GM12878 (cell line): ENCODE measurements at regions of chr3 and their contacts with region 1.

Region 1: DNA sequence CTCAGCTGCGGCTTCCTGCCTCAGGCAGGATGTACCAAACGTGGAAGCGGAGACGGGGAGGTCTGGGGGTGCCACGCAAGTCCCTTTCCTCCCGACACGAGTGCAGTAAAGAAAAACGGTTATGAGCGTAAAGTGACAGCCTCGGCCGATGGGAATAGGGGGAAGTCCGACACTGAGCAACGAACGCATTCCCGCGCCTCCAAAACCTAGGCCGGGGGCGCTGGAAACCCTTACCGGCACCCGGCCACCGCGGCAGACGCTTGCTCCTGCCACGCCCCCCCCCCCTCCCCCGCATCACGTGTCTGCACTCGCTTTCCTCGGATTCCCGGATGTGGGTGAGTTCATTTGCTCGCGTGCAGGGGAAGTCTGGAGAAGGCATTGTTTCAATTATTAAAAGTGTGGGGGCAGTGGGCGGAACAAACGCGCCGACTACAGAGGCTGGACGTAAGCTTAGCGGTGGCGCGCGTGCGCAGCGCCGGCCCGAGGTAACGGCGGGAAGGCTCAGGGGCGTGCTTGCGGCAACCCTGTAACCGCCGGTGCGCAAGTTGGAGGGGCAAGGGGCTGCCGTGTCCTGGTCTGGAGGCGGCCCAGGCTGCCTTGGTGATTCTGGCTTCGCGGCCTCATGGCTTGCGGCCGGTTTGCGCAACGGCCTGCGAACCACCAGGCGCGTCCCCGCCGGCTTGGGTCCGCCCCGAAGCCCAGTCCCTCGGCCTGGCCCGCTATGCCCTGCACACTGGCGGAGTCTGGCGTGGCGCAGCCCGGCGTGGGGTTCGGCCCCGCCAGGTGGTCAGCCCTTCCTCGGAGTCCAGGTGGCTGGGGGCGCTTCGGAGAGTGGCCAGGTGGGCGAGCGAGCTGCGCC is at the starts of genes ANAPC13 and CEP63:
- DNase-seq: peak; percentile 96
- ATAC-seq: peak; percentile 90
- H3K4me3 ChIP-seq: peak within 1 kb of the TSS; percentile 82
- H3K27ac ChIP-seq: peak within 1 kb of the TSS; percentile 87
- H3K4me1 ChIP-seq: peaks cover 6% of the 10 kb centered on the region
- H3K27me3 ChIP-seq: no peaks in the 10 kb centered on the region
- CTCF ChIP-seq: no peak
- EP300 ChIP-seq: 0 out of 4 replicates have a peak, but pooled peaks of 1 of the 2 experiments have one; percentile 7
- POLR2A ChIP-seq: peak; percentile 89
- RAD21 ChIP-seq: no peak
- polyA plus RNA-seq, gene ANAPC13: 129 to 139 TPM
- polyA plus RNA-seq, gene CEP63: 14.0 to 16.4 TPM

Region 2: DNA sequence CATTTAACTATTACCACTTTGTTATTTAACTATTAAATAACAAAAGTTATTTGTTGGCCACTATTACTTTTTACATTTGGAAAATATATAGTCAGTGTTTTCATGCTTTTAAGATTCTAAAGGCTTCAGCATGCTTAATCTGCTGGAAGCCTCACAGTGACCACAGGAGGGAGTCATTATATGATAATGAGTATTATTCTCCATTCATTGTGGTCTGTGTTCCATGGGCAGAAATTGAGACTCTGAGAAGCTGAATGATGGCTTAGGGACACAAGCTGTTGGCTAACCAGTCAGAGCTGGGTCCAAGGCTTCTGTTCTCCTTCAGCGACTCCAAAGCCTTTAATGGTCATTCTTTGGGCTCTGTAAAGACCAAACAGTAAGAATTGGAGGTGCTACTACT is 1021.4 kb before region 1 on chr3:
- CTCF ChIA-PET with region 1: no interaction called
- POLR2A ChIA-PET with region 1: no interaction called
- RAD21 ChIA-PET with region 1: no interaction called
- SMC1A ChIA-PET with region 1: no interaction called
- in situ Hi-C with region 1: loop called (anchors 25 kb)
- intact Hi-C with region 1: no loop called
- DNase-seq: no peak
- ATAC-seq: peak; percentile 65
- H3K4me3 ChIP-seq: no peak overlapping the region
- H3K27ac ChIP-seq: peak overlapping the region; percentile 4; the same call in 1 of the 2 replicates
- H3K4me1 ChIP-seq: peaks cover 58% of the 10 kb centered on the region
- H3K27me3 ChIP-seq: no peaks in the 10 kb centered on the region
- CTCF ChIP-seq: peak; percentile 22 to 32 (median 23); a peak in 3 of 6 replicates
- EP300 ChIP-seq: no peak
- POLR2A ChIP-seq: no peak
- RAD21 ChIP-seq: peak; percentile 58

Region 3: GRCh38 chr3:133661454-133662277 is 824.3 kb before region 1 on chr3 and contains the start of gene TOPBP1:
- CTCF ChIA-PET with region 1: no interaction called
- POLR2A ChIA-PET with region 1: no interaction called
- RAD21 ChIA-PET with region 1: no interaction called
- SMC1A ChIA-PET with region 1: no interaction called
- in situ Hi-C with region 1: loop called (anchors 10 kb)
- intact Hi-C with region 1: no loop called
- DNase-seq: no peak
- ATAC-seq: peak; percentile 86
- H3K4me3 ChIP-seq: peak within 1 kb of the TSS; percentile 95
- H3K27ac ChIP-seq: peak within 1 kb of the TSS; percentile 96
- H3K4me1 ChIP-seq: peaks cover 4% of the 10 kb centered on the region; the same call in 1 of the 2 replicates
- H3K27me3 ChIP-seq: no peaks in the 10 kb centered on the region
- CTCF ChIP-seq: no peak
- EP300 ChIP-seq: no peak
- POLR2A ChIP-seq: peak; percentile 92
- RAD21 ChIP-seq: no peak
- polyA plus RNA-seq, gene TOPBP1: 18.3 to 19.9 TPM

Region 4: GRCh38 chr3:133805527-133806475 is 680.1 kb before region 1 on chr3 and contains the start of gene SRPRB:
- CTCF ChIA-PET with region 1: no interaction called
- POLR2A ChIA-PET with region 1: no interaction called
- RAD21 ChIA-PET with region 1: no interaction called
- SMC1A ChIA-PET with region 1: no interaction called
- in situ Hi-C with region 1: no loop called
- intact Hi-C with region 1: loop called (anchors 5 kb)
- DNase-seq: peak; percentile 87
- ATAC-seq: peak; percentile 98
- H3K4me3 ChIP-seq: peak within 1 kb of the TSS; percentile 74
- H3K27ac ChIP-seq: peak within 1 kb of the TSS; percentile 60
- H3K4me1 ChIP-seq: no peaks in the 10 kb centered on the region
- H3K27me3 ChIP-seq: no peaks in the 10 kb centered on the region
- CTCF ChIP-seq: no peak
- EP300 ChIP-seq: 0 out of 4 replicates have a peak, but pooled peaks of 1 of the 2 experiments have one; percentile 8
- POLR2A ChIP-seq: peak; percentile 99
- RAD21 ChIP-seq: no peak
- polyA plus RNA-seq, gene SRPRB: 30.6 to 39.1 TPM

Region 5: DNA sequence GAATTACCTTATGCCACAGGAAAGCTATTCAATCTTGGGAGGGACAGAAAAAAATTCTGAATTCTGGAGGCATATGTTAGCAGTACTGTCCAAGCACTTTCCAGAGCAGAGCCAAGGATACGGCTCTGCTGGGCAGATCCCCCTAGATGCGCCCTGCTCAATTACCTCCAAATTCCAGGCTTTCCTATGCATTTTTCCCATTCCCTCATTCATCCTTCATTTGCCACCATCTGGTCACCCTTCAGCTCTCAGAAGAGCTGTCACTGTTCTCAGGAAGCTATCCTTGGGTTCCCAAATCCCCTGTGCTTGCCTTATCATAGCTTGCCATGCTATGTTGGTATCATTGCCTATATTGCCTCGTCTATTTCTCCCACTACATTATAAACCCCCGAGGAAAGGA is 280.5 kb before region 1 on chr3:
- CTCF ChIA-PET with region 1: no interaction called
- POLR2A ChIA-PET with region 1: interaction called, 3 read pairs
- RAD21 ChIA-PET with region 1: no interaction called
- SMC1A ChIA-PET with region 1: no interaction called
- in situ Hi-C with region 1: loop called (anchors 5 kb)
- intact Hi-C with region 1: no loop called
- DNase-seq: no peak
- ATAC-seq: no peak
- H3K4me3 ChIP-seq: no peak overlapping the region
- H3K27ac ChIP-seq: no peak overlapping the region
- H3K4me1 ChIP-seq: no peaks in the 10 kb centered on the region
- H3K27me3 ChIP-seq: no peaks in the 10 kb centered on the region
- CTCF ChIP-seq: no peak
- EP300 ChIP-seq: no peak
- POLR2A ChIP-seq: no peak
- RAD21 ChIP-seq: no peak

Region 6: GRCh38 chr3:134473868-134474546 is 11.9 kb before region 1 on chr3:
- CTCF ChIA-PET with region 1: interaction called, 69 read pairs
- POLR2A ChIA-PET with region 1: interaction called, 3 read pairs
- RAD21 ChIA-PET with region 1: interaction called, 7 read pairs
- SMC1A ChIA-PET with region 1: interaction called, 10 read pairs
- in situ Hi-C with region 1: no loop called
- intact Hi-C with region 1: no loop called
- DNase-seq: no peak
- ATAC-seq: peak; percentile 88
- H3K4me3 ChIP-seq: no peak overlapping the region
- H3K27ac ChIP-seq: no peak overlapping the region
- H3K4me1 ChIP-seq: no peaks in the 10 kb centered on the region
- H3K27me3 ChIP-seq: no peaks in the 10 kb centered on the region
- CTCF ChIP-seq: peak; percentile 53 to 76 (median 65)
- EP300 ChIP-seq: no peak
- POLR2A ChIP-seq: no peak
- RAD21 ChIP-seq: peak; percentile 76

Region 7: GRCh38 chr3:134526319-134526718 is 40.4 kb after region 1 on chr3:
- CTCF ChIA-PET with region 1: no interaction called
- POLR2A ChIA-PET with region 1: no interaction called
- RAD21 ChIA-PET with region 1: no interaction called
- SMC1A ChIA-PET with region 1: no interaction called
- in situ Hi-C with region 1: no loop called
- intact Hi-C with region 1: no loop called
- DNase-seq: no peak
- ATAC-seq: no peak
- H3K4me3 ChIP-seq: no peak overlapping the region
- H3K27ac ChIP-seq: no peak overlapping the region
- H3K4me1 ChIP-seq: no peaks in the 10 kb centered on the region
- H3K27me3 ChIP-seq: no peaks in the 10 kb centered on the region
- CTCF ChIP-seq: no peak
- EP300 ChIP-seq: no peak
- POLR2A ChIP-seq: no peak
- RAD21 ChIP-seq: no peak

Region 8: DNA sequence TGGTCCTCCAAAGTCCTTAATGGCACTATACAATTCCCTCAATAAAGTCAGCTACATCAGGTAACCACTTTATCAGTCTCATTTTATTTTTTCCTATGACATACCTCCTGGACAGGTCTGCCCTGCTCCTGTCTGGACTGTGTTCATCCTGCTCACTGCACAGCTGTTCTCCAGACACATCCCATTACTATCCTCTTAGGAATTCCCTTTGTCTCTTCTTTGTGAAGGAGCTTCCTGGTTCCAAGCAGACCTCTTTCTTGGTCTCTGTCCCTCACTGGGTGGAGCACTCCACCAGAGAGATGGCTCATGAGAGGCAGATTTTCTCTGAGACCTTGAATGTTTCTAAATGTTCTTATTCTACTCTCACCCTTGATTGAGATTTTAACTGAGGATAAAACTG is 104.8 kb after region 1 on chr3:
- CTCF ChIA-PET with region 1: no interaction called
- POLR2A ChIA-PET with region 1: no interaction called
- RAD21 ChIA-PET with region 1: no interaction called
- SMC1A ChIA-PET with region 1: no interaction called
- in situ Hi-C with region 1: no loop called
- intact Hi-C with region 1: no loop called
- DNase-seq: no peak
- ATAC-seq: no peak
- H3K4me3 ChIP-seq: no peak overlapping the region
- H3K27ac ChIP-seq: no peak overlapping the region
- H3K4me1 ChIP-seq: no peaks in the 10 kb centered on the region
- H3K27me3 ChIP-seq: no peaks in the 10 kb centered on the region
- CTCF ChIP-seq: no peak
- EP300 ChIP-seq: no peak
- POLR2A ChIP-seq: no peak
- RAD21 ChIP-seq: no peak